ENCODE measurements at regions of chr7 and their contacts with region 1.

Region 1: DNA sequence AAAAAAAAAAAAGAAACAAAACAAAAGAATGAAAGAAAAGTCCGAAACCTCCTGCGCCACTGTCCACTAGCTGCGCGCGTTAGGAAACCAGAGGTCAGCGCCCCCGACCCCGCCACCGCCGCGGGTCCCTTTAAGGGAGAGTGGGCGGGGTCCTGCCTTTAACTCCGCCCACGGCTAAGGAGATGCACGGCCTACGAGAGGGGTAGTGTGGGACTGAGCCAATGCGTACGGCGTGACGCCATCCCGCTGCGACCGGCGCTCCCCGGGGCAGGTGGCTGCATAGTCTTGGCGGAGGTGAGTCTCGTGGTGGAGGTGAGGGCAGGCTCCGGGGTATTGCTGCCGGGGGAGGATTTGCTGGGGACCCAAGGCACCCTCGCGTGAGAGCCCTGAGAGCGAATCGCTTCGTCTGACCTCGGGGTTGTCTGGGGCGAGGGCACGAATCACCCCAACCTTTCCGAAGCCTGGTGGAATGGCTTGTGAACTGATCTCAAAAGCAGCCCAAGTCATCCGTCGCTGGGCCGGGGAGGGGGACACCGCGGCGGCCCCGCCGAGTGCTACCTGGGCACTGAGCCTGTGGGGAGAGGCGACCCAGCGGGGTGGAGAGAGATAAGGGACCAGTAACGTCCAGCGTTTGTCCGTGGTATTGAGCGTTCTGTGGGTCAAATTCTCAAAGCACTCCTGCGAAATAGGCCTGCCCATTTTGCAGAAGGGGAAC is at the start of gene MRPS17:
- DNase-seq: peak; percentile 82 to 96 (median 93)
- ATAC-seq: peak; percentile 99
- H3K4me3 ChIP-seq: peak within 1 kb of the TSS; percentile 71 to 86
- H3K4me3 Mint-ChIP-seq: peak within 1 kb of the TSS; percentile 94
- H3K27ac ChIP-seq: peak within 1 kb of the TSS; percentile 78 to 91
- H3K27ac Mint-ChIP-seq: peak within 1 kb of the TSS; percentile 97
- H3K4me1 ChIP-seq: peaks cover 6% of the 10 kb centered on the region
- H3K4me1 Mint-ChIP-seq: peaks cover 26% of the 10 kb centered on the region
- H3K27me3 ChIP-seq: no peaks in the 10 kb centered on the region
- H3K27me3 Mint-ChIP-seq: no peaks in the 10 kb centered on the region
- CTCF ChIP-seq: no peak
- total RNA-seq, gene MRPS17: 7.8 to 8.9 TPM

Region 2: GRCh38 chr7:54758702-54759592 is 1192.8 kb before region 1 on chr7 and contains the start of gene SEC61G:
- CTCF ChIA-PET with region 1: no interaction called
- POLR2A ChIA-PET with region 1: no interaction called
- intact Hi-C with region 1: loop called (anchors 5 kb)
- DNase-seq: peak; percentile 87 to 98 (median 95)
- ATAC-seq: peak; percentile 97
- H3K4me3 ChIP-seq: peak within 1 kb of the TSS; percentile 78 to 96
- H3K4me3 Mint-ChIP-seq: peak within 1 kb of the TSS; percentile 100
- H3K27ac ChIP-seq: peak within 1 kb of the TSS; percentile 74 to 90
- H3K27ac Mint-ChIP-seq: peak within 1 kb of the TSS; percentile 97
- H3K4me1 ChIP-seq: peaks cover 21% of the 10 kb centered on the region
- H3K4me1 Mint-ChIP-seq: peaks cover 46% of the 10 kb centered on the region
- H3K27me3 ChIP-seq: no peaks in the 10 kb centered on the region
- H3K27me3 Mint-ChIP-seq: peaks cover 3% of the 10 kb centered on the region
- CTCF ChIP-seq: no peak
- total RNA-seq, gene SEC61G: 50.5 to 58.0 TPM

Region 3: GRCh38 chr7:55838595-55838994 is 113.2 kb before region 1 on chr7:
- CTCF ChIA-PET with region 1: no interaction called
- POLR2A ChIA-PET with region 1: no interaction called
- intact Hi-C with region 1: no loop called
- DNase-seq: no peak
- ATAC-seq: no peak
- H3K4me3 ChIP-seq: no peak overlapping the region
- H3K4me3 Mint-ChIP-seq: no peak overlapping the region
- H3K27ac ChIP-seq: no peak overlapping the region
- H3K27ac Mint-ChIP-seq: no peak overlapping the region
- H3K4me1 ChIP-seq: no peaks in the 10 kb centered on the region
- H3K4me1 Mint-ChIP-seq: no peaks in the 10 kb centered on the region
- H3K27me3 ChIP-seq: no peaks in the 10 kb centered on the region
- H3K27me3 Mint-ChIP-seq: peaks cover 2% of the 10 kb centered on the region
- CTCF ChIP-seq: no peak

Region 4: DNA sequence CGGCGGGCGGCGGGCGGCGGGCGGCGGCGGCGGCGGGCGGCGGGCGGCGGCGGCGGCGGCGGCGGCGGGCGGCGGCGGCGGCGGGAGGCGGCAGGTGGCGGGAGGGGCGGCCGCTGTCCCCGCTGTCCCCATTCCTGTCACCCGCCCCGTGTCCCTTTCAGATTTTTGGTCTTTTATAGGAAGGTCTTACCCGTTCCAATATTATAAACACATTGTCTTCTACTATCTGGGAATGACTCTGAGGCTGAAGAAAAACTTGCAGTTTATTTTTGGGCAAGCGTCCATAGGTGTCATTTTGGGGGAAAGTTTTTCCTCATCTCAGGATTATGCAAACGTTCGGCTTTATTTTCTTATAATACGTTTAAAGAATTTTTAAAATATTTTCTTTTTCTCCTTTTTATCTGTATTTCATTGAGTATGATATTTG is 64.0 kb before region 1 on chr7:
- CTCF ChIA-PET with region 1: no interaction called
- POLR2A ChIA-PET with region 1: no interaction called
- intact Hi-C with region 1: loop called (anchors 1 kb)
- DNase-seq: peak in 2 of 9 experiments; percentile 5 to 38
- ATAC-seq: peak; percentile 15
- H3K4me3 ChIP-seq: peak overlapping the region in 1 of 2 experiments; percentile 58
- H3K4me3 Mint-ChIP-seq: peak overlapping the region; percentile 86
- H3K27ac ChIP-seq: no peak overlapping the region
- H3K27ac Mint-ChIP-seq: peak overlapping the region; percentile 87
- H3K4me1 ChIP-seq: no peaks in the 10 kb centered on the region
- H3K4me1 Mint-ChIP-seq: peaks cover 8% of the 10 kb centered on the region
- H3K27me3 ChIP-seq: no peaks in the 10 kb centered on the region
- H3K27me3 Mint-ChIP-seq: no peaks in the 10 kb centered on the region
- CTCF ChIP-seq: no peak

Region 5: GRCh38 chr7:55992346-55992745 is 40.6 kb after region 1 on chr7:
- CTCF ChIA-PET with region 1: no interaction called
- POLR2A ChIA-PET with region 1: no interaction called
- intact Hi-C with region 1: no loop called
- DNase-seq: no peak
- ATAC-seq: no peak
- H3K4me3 ChIP-seq: no peak overlapping the region
- H3K4me3 Mint-ChIP-seq: no peak overlapping the region
- H3K27ac ChIP-seq: no peak overlapping the region
- H3K27ac Mint-ChIP-seq: no peak overlapping the region
- H3K4me1 ChIP-seq: no peaks in the 10 kb centered on the region
- H3K4me1 Mint-ChIP-seq: no peaks in the 10 kb centered on the region
- H3K27me3 ChIP-seq: no peaks in the 10 kb centered on the region
- H3K27me3 Mint-ChIP-seq: no peaks in the 10 kb centered on the region
- CTCF ChIP-seq: no peak

Measured in CD8-positive, alpha-beta T cell (primary cell).